Heart right ventricle (tissue), 16 donors: ENCODE measurements at regions of chr13 and their contacts with region 1.

Region 1: GRCh38 chr13:97212601-97213040 is 9.5 kb upstream of the MBNL2 start:
- DNase-seq: no peak
- ATAC-seq: peak in 4 of 8 donors; percentile 65 to 80 (median 70)
- H3K4me3 ChIP-seq: no peak overlapping the region
- H3K27ac ChIP-seq: no peak overlapping the region
- H3K4me1 ChIP-seq: peaks cover 0 to 25% (median 0%) of the 10 kb centered on the region in 9 donors
- H3K27me3 ChIP-seq: peaks cover 0 to 14% (median 0%) of the 10 kb centered on the region in 7 donors
- CTCF ChIP-seq: peak; percentile 16 to 65 (median 51)

Region 2: DNA sequence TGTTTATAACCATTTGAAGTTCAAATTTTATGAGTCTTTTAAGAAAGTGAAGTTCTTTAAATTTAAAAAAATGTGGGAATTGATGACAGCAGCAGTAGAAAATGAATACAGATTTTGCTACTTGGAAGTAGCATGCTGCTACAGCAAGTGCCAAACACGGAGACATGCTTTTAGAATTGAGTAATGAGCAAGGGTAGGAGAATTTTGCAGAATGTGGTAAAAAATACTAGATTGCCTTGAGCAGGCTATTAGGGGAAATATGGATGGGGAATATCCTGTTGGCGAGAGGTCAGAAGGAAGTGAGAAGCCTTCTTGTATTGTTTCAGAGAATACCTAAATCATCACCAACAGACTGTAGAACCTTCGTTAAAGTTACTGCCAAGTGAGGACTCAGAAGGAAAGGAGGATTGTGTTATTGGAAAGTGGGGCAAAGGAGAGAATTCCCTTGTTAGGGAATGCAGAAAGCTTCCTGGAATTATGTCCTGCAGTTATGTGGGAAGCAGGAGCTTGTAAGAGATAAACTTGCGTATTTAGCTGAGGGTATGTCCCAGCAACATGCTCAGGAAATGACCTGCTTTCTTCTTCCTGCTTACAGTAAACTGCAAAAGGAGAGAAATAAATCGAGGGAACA is 186.0 kb before region 1 on chr13:
- intact Hi-C with region 1: loop called in 1 of 10 experiments (anchors 10 kb)
- DNase-seq: no peak
- ATAC-seq: peak in 4 of 8 donors; percentile 28 to 49 (median 37)
- H3K4me3 ChIP-seq: no peak overlapping the region
- H3K27ac ChIP-seq: peak overlapping the region in 3 of 10 donors; percentile 11 to 45 (median 16)
- H3K4me1 ChIP-seq: peaks cover 0 to 25% (median 11%) of the 10 kb centered on the region in 9 donors
- H3K27me3 ChIP-seq: peaks cover 0 to 12% (median 0%) of the 10 kb centered on the region in 7 donors
- CTCF ChIP-seq: no peak

Region 3: GRCh38 chr13:97274829-97275252 is 62.2 kb after region 1 on chr13:
- intact Hi-C with region 1: no loop called
- DNase-seq: no peak
- ATAC-seq: peak in 1 of 8 donors; percentile 5
- H3K4me3 ChIP-seq: no peak overlapping the region
- H3K27ac ChIP-seq: peak overlapping the region in 8 of 10 donors; percentile 25 to 80 (median 44)
- H3K4me1 ChIP-seq: peaks cover 3 to 92% (median 76%) of the 10 kb centered on the region in 9 donors
- H3K27me3 ChIP-seq: no peaks in the 10 kb centered on the region
- CTCF ChIP-seq: no peak

Region 4: GRCh38 chr13:97344265-97345175 is 131.9 kb after region 1 on chr13:
- intact Hi-C with region 1: loop called in 2 of 10 experiments (anchors 5 to 10 kb)
- DNase-seq: peak; percentile 49 to 70
- ATAC-seq: peak; percentile 74 to 89 (median 83)
- H3K4me3 ChIP-seq: no peak overlapping the region
- H3K27ac ChIP-seq: peak overlapping the region in 5 of 10 donors; percentile 1 to 33 (median 13)
- H3K4me1 ChIP-seq: peaks cover 0 to 51% (median 29%) of the 10 kb centered on the region in 9 donors
- H3K27me3 ChIP-seq: no peaks in the 10 kb centered on the region
- CTCF ChIP-seq: peak; percentile 50 to 87 (median 70)